ENCODE measurements at regions of chr13 and their contacts with region 1.

Region 1: DNA sequence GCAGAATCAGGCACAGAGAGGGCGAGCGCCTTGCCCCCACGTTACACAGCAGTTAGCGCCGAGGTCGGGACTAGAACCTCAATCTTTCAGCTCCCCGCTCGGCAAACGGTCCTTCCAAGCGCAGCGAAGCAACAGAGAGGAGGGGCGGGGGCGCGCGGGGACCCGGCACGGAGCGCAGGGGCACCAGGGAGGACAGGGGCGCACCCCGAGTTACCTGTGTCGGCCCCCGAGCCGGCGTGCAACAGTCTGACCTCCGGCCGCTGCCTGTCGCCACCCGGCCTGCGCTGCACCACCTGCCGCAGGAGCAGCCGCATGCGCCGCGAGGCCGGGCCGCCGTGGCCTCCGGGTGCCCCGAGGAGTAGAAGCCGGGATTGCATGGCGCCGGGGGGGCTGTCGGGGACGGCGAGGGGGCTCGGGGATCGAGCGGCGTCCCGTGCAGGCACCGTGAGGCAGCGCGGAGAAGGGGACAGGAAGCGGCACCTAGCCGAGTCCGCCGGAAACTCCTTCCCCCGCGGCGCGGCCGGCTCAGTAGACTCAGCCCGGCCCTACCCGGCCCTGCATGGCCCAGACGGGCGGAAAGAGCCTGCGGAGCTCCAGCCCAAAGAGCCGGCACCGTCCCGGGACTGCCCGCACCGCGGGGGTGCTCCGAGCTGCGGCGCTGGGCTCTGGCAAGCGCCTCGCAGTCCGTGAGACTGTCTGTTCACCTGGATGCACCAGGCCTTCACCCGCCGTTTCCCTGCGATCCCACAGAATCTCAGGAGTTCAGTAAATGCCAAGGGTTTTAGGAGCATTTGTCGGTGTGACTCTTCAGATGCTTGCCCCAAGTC is at the start of gene VWA8:
- DNase-seq: peak; percentile 84 to 92 (median 87)
- ATAC-seq: peak; percentile 75 to 97 (median 97)
- H3K4me3 ChIP-seq: peak within 1 kb of the TSS; percentile 53 to 95 (median 84)
- H3K27ac ChIP-seq: peak within 1 kb of the TSS; percentile 75 to 95 (median 90)
- H3K4me1 ChIP-seq: peaks cover 0 to 38% (median 10%) of the 10 kb centered on the region in 12 donors
- H3K27me3 ChIP-seq: no peaks in the 10 kb centered on the region
- CTCF ChIP-seq: peak in 1 of 12 donors; percentile 19
- POLR2A ChIP-seq: peak in 1 of 2 donors; percentile 20
- total RNA-seq, gene VWA8: 33.4 to 64.1 (median 50.9) TPM

Region 2: DNA sequence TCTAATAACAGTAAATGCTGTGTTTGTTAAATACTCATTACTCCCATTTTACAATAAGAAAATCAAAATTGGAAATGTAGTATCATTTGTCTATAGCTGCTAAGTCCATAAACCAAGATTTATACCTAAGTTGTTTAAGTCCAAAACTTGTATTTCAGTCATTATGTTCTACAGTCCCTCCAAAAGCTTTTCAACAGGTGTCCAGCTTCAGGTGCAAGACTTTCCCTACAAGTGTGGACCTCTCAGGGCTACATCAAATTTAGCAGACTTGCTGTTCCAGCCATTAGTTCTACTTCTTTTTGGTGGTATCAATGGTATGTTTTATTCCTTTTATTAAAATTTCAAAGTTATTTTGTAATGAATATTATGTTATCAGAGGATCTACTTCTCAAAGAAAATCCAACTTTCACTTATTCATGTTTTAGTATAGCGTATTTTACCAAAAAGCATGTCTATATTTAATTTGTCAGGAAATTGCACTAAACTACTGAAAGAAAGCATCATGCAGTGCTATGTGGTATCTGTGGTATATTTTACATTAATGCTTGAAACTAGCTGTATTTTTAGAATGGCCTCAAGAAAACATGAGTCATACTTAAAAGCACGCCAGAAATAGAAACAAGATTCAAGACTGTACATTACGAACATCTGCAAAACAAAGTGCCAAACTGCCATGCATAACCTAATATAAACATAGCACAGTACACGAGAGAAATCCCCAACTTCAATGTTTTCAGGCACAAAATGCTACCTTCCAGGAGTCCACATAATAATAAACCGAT is 44.5 kb before region 1 on chr13:
- intact Hi-C with region 1: loop called in 1 of 10 experiments (anchors 5 kb)
- DNase-seq: no peak
- ATAC-seq: peak in 3 of 4 donors; percentile 39 to 58 (median 50)
- H3K4me3 ChIP-seq: peak overlapping the region in 3 of 12 donors; percentile 8 to 12 (median 10)
- H3K27ac ChIP-seq: peak overlapping the region in 11 of 12 donors; percentile 10 to 63 (median 55)
- H3K4me1 ChIP-seq: peaks cover 3 to 68% (median 48%) of the 10 kb centered on the region in 12 donors
- H3K27me3 ChIP-seq: no peaks in the 10 kb centered on the region
- CTCF ChIP-seq: no peak
- POLR2A ChIP-seq: no peak

Region 3: GRCh38 chr13:42048682-42049453 is 88.0 kb after region 1 on chr13:
- intact Hi-C with region 1: loop called in 3 of 10 experiments (anchors 5 to 10 kb)
- DNase-seq: peak; percentile 88 to 91 (median 89)
- ATAC-seq: peak; percentile 80 to 91 (median 88)
- H3K4me3 ChIP-seq: peak overlapping the region; percentile 70 to 96 (median 89)
- H3K27ac ChIP-seq: peak overlapping the region; percentile 89 to 96 (median 90)
- H3K4me1 ChIP-seq: peaks cover 0 to 28% (median 17%) of the 10 kb centered on the region in 12 donors
- H3K27me3 ChIP-seq: no peaks in the 10 kb centered on the region
- CTCF ChIP-seq: peak in 7 of 12 donors; percentile 9 to 53 (median 26)
- POLR2A ChIP-seq: peak in 1 of 2 donors; percentile 39

Region 4: GRCh38 chr13:42432711-42433110 is 471.9 kb after region 1 on chr13:
- intact Hi-C with region 1: no loop called
- DNase-seq: no peak
- ATAC-seq: no peak
- H3K4me3 ChIP-seq: no peak overlapping the region
- H3K27ac ChIP-seq: no peak overlapping the region
- H3K4me1 ChIP-seq: no peaks in the 10 kb centered on the region
- H3K27me3 ChIP-seq: peaks cover 0 to 3% (median 0%) of the 10 kb centered on the region in 9 donors
- CTCF ChIP-seq: no peak
- POLR2A ChIP-seq: no peak